ENCODE measurements at regions of chr4 and their contacts with region 1.

Region 1: DNA sequence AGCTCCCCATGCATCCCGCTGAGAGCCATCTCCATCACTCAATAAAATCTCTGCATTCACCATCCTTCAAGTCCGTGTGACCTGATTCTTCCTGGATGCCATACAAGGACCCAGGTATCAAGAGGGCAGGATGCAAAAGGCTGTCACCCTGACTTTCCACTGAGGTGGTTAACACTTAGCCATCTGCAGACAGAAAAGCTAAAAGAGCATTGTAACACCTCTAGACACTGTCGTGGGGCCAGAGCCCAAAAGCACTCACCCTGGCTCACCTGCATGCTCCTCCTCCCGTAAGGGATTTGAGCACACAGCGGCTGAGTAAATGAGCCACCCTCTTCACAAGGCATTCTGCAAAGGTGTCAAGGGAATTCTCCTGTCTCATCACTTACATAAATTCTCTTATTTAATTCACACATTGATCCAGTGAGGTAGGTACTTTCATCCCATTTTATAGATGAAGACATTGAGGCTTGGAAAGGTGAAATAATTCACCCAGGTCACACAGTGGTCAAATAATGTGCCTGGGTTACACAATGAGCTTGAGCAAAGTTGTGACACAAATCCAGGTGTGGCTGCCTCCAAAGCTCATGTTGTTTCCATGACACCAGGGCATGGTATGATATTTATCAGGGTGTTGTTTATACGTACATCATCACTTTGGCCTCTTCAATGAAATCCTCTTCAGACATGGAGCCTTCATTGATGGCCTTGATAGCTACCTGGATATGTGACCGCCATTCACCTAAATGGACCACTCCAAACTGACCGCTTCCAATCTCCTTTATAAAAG is 48.0 kb downstream of the TXK start:
- DNase-seq: no peak
- H3K4me3 ChIP-seq: no peak overlapping the region
- H3K27ac ChIP-seq: no peak overlapping the region
- H3K4me1 ChIP-seq: no peaks in the 10 kb centered on the region
- H3K27me3 ChIP-seq: no peaks in the 10 kb centered on the region
- CTCF ChIP-seq: no peak

Region 2: GRCh38 chr4:47862297-47862696 is 223.7 kb before region 1 on chr4:
- intact Hi-C with region 1: no loop called
- DNase-seq: no peak
- H3K4me3 ChIP-seq: no peak overlapping the region
- H3K27ac ChIP-seq: no peak overlapping the region
- H3K4me1 ChIP-seq: no peaks in the 10 kb centered on the region
- H3K27me3 ChIP-seq: no peaks in the 10 kb centered on the region
- CTCF ChIP-seq: no peak

Region 3: DNA sequence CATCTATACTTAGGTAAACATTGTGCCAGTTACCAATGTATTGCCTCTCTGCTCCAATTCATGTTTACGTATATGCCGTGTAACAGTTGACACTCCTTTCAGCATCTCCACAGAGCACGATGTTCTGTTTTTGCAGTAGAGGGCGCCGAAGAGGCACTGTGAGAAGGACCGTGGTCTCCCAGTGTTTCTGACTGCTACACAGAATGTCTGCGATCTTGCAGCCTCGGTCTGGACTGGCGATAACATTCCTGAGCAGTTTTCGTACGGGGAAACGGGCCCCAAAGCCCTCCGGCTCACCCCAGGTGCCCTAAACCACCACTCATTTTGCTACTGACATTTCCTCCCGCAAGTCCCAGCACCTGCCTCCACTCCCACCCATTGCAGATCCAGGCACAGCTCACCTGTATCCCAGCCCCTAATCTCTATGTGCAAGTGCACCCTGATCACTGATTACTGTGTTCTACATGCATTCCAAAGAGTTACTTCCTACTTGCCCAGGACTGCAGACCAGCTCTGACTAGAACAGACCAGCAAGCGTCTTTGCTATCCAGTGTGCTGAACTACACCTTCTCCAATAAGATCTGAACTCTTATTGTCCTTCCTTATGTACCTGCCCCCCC is 159.3 kb before region 1 on chr4:
- intact Hi-C with region 1: loop called (anchors 5 kb)
- DNase-seq: peak; percentile 71
- H3K4me3 ChIP-seq: peak overlapping the region; percentile 16
- H3K27ac ChIP-seq: no peak overlapping the region
- H3K4me1 ChIP-seq: no peaks in the 10 kb centered on the region
- H3K27me3 ChIP-seq: no peaks in the 10 kb centered on the region
- CTCF ChIP-seq: peak; percentile 55

Region 4: DNA sequence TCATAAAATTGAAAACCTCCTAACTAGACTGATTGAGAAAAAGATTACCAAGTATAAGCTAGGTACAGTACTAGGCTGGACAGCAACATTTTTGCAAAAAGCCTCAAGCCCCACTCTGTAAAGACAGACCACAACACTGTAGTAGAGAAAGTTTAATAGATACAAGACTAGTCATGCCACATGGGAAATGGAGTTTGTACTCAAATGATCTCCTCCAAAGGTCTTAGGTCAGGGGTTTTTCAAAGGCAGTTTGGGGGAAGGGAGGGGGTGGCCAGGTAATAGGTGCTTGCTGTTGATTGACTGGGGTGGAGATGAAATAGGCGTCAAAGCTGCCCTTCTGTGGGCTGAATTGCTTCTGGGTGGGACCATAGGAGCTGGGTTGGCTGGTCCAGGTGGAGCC is 83.7 kb before region 1 on chr4:
- intact Hi-C with region 1: loop called (anchors 2 kb)
- DNase-seq: no peak
- H3K4me3 ChIP-seq: no peak overlapping the region
- H3K27ac ChIP-seq: no peak overlapping the region
- H3K4me1 ChIP-seq: no peaks in the 10 kb centered on the region
- H3K27me3 ChIP-seq: no peaks in the 10 kb centered on the region
- CTCF ChIP-seq: no peak

Region 5: GRCh38 chr4:48016141-48017103 is 69.6 kb before region 1 on chr4 and contains the starts of genes CNGA1 and NIPAL1:
- intact Hi-C with region 1: no loop called
- DNase-seq: peak; percentile 93
- H3K4me3 ChIP-seq: peak within 1 kb of the TSS; percentile 54
- H3K27ac ChIP-seq: peak within 1 kb of the TSS; percentile 88
- H3K4me1 ChIP-seq: no peaks in the 10 kb centered on the region
- H3K27me3 ChIP-seq: no peaks in the 10 kb centered on the region
- CTCF ChIP-seq: no peak
- total RNA-seq, gene CNGA1: 2.6 to 15.9 TPM
- total RNA-seq, gene NIPAL1: 38.7 to 47.9 TPM

Region 6: DNA sequence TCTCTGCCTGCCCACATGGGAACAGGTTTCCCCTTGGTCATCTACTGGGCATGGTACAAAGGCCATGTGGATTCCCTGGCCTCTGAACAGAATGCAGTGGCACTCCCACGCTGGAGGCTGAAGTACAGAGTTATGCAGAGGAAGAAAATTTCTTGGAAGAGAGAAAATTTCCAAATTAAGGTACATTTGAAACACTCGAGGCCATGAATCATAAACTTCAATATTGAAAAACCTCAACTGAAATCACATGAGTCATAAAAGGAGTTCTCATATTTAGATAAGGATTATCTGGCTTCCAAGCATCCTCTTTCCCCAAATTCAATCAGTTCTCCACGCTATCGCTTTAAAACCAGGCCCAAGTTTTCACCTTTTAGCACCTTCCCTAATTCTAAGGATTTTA is 76.1 kb after region 1 on chr4:
- intact Hi-C with region 1: no loop called
- DNase-seq: no peak
- H3K4me3 ChIP-seq: no peak overlapping the region
- H3K27ac ChIP-seq: no peak overlapping the region
- H3K4me1 ChIP-seq: no peaks in the 10 kb centered on the region
- H3K27me3 ChIP-seq: no peaks in the 10 kb centered on the region
- CTCF ChIP-seq: no peak

Measured in colonic mucosa (tissue), 4 donors.